Activated T-helper 1 cell treated with anti-CD3 and anti-CD28 coated beads, Interleukin-12 subunit alpha, Interleukin-12 subunit beta, Interleukin-2, Interleukin-4 antibody, amounts not matched to agents 30 ng/mL and 10 ng/mL and 1 ng/mL, durations not matched to agents 14 hours and 24 hours and 36 hours (primary cell): ENCODE measurements at regions of chr4 and their contacts with region 1.

Region 1: GRCh38 chr4:153083447-153083947 is 120.7 kb upstream of the TRIM2 start:
- DNase-seq: peak; percentile 11
- H3K4me3 Mint-ChIP-seq: no peak overlapping the region
- H3K27ac Mint-ChIP-seq: no peak overlapping the region
- H3K4me1 Mint-ChIP-seq: peaks cover 19% of the 10 kb centered on the region
- H3K27me3 Mint-ChIP-seq: peaks cover 28% of the 10 kb centered on the region

Region 2: GRCh38 chr4:152850377-152850776 is 233.1 kb before region 1 on chr4:
- intact Hi-C with region 1: loop called (anchors 1 kb)
- DNase-seq: no peak
- H3K4me3 Mint-ChIP-seq: no peak overlapping the region
- H3K27ac Mint-ChIP-seq: no peak overlapping the region
- H3K4me1 Mint-ChIP-seq: peaks cover 23% of the 10 kb centered on the region
- H3K27me3 Mint-ChIP-seq: no peaks in the 10 kb centered on the region

Region 3: DNA sequence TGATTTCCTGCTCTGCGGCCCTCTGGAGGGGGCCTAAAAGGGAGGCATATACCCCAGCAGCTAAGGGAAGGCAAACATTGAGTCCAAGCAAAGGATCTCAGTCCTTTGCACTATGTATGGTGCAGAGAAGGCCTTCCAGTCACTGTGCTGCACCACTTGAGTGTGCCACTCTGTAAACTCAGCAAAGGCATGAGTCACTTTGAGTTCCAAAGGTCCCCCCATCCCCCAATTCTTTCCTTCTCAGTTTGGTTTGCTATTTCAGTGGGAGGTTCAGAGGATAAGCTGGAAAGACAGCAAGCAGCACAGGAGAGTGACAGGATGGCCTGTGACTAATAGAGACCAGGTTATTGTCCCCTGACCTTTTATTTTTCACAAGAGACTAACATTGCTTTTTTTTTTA is 16.1 kb before region 1 on chr4:
- intact Hi-C with region 1: no loop called
- DNase-seq: no peak
- H3K4me3 Mint-ChIP-seq: no peak overlapping the region
- H3K27ac Mint-ChIP-seq: no peak overlapping the region
- H3K4me1 Mint-ChIP-seq: no peaks in the 10 kb centered on the region
- H3K27me3 Mint-ChIP-seq: peaks cover 9% of the 10 kb centered on the region

Region 4: GRCh38 chr4:153127760-153128494 is 44.4 kb after region 1 on chr4:
- intact Hi-C with region 1: loop called (anchors 1 kb)
- DNase-seq: peak; percentile 71
- H3K4me3 Mint-ChIP-seq: no peak overlapping the region
- H3K27ac Mint-ChIP-seq: no peak overlapping the region
- H3K4me1 Mint-ChIP-seq: no peaks in the 10 kb centered on the region
- H3K27me3 Mint-ChIP-seq: peaks cover 28% of the 10 kb centered on the region

Region 5: GRCh38 chr4:153318696-153319320 is 235.3 kb after region 1 on chr4:
- intact Hi-C with region 1: loop called (anchors 1 kb)
- DNase-seq: no peak
- H3K4me3 Mint-ChIP-seq: no peak overlapping the region
- H3K27ac Mint-ChIP-seq: no peak overlapping the region
- H3K4me1 Mint-ChIP-seq: no peaks in the 10 kb centered on the region
- H3K27me3 Mint-ChIP-seq: peaks cover 5% of the 10 kb centered on the region

Region 6: GRCh38 chr4:153643406-153644383 is 560.2 kb after region 1 on chr4:
- intact Hi-C with region 1: loop called (anchors 1 kb)
- DNase-seq: no peak
- H3K4me3 Mint-ChIP-seq: no peak overlapping the region
- H3K27ac Mint-ChIP-seq: no peak overlapping the region
- H3K4me1 Mint-ChIP-seq: peaks cover 22% of the 10 kb centered on the region
- H3K27me3 Mint-ChIP-seq: no peaks in the 10 kb centered on the region

Region 7: DNA sequence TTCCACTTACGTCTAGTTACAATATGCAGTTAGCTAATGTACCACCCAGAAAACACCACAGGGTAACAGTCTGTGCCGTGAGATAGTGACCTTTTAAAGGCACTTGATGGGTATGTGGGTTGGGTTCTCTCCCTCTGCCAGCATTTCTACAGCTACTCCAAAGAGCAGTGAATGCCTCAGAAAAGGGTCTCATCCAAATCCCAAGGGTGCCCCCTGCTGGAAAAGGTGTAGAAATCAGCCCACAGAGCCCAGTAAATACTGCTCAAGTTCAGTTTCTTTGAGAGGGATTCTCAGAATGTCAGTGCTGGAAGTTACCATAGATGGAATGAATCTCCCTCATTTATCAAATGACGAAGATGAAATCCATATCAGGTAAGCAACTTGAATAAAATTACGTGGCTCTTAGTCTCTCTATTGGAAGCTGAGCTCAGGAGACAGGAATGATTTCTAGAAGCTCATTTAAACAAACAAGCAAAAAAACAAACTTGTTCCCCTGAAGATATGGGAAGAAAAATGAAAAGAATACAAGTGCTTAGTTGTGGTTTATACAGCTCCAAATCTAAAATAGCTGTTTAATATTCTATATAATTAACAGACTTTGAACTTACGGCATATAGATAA is 666.8 kb after region 1 on chr4:
- intact Hi-C with region 1: loop called (anchors 1 kb)
- DNase-seq: peak; percentile 52
- H3K4me3 Mint-ChIP-seq: no peak overlapping the region
- H3K27ac Mint-ChIP-seq: no peak overlapping the region
- H3K4me1 Mint-ChIP-seq: no peaks in the 10 kb centered on the region
- H3K27me3 Mint-ChIP-seq: peaks cover 31% of the 10 kb centered on the region